Activated CD4-positive, alpha-beta memory T cell treated with anti-CD3 and anti-CD28 coated beads for 36 hours (primary cell): ENCODE measurements at regions of chr19 and their contacts with region 1.

Region 1: GRCh38 chr19:49272184-49272583 is 52.8 kb downstream of the SLC6A16 start:
- DNase-seq: no peak
- H3K4me3 Mint-ChIP-seq: no peak overlapping the region
- H3K27ac Mint-ChIP-seq: no peak overlapping the region
- H3K4me1 Mint-ChIP-seq: peaks cover 12% of the 10 kb centered on the region
- H3K27me3 Mint-ChIP-seq: peaks cover 11% of the 10 kb centered on the region

Region 2: GRCh38 chr19:49127674-49128544 is 144.3 kb before region 1 on chr19:
- CTCF ChIA-PET with region 1: no interaction called
- POLR2A ChIA-PET with region 1: no interaction called
- intact Hi-C with region 1: no loop called
- DNase-seq: peak; percentile 97
- H3K4me3 Mint-ChIP-seq: peak overlapping the region; percentile 86
- H3K27ac Mint-ChIP-seq: peak overlapping the region; percentile 78
- H3K4me1 Mint-ChIP-seq: peaks cover 13% of the 10 kb centered on the region
- H3K27me3 Mint-ChIP-seq: no peaks in the 10 kb centered on the region

Region 3: GRCh38 chr19:49443366-49444099 is 171.3 kb after region 1 on chr19:
- CTCF ChIA-PET with region 1: interaction called, 3 read pairs
- POLR2A ChIA-PET with region 1: no interaction called
- intact Hi-C with region 1: loop called (anchors 2 kb)
- DNase-seq: peak; percentile 96
- H3K4me3 Mint-ChIP-seq: peak overlapping the region; percentile 74
- H3K27ac Mint-ChIP-seq: peak overlapping the region; percentile 82
- H3K4me1 Mint-ChIP-seq: peaks cover 33% of the 10 kb centered on the region
- H3K27me3 Mint-ChIP-seq: peaks cover 36% of the 10 kb centered on the region